Caco-2 (cell line): ENCODE measurements at regions of chr3 and their contacts with region 1.

Region 1: GRCh38 chr3:167716920-167717319 is 17.8 kb downstream of the PDCD10 start:
- DNase-seq: peak; percentile 55 to 63
- H3K4me3 ChIP-seq: no peak overlapping the region
- H3K4me3 Mint-ChIP-seq: peak overlapping the region; percentile 28
- H3K27ac Mint-ChIP-seq: no peak overlapping the region
- H3K4me1 ChIP-seq: peaks cover 29% of the 10 kb centered on the region
- H3K4me1 Mint-ChIP-seq: peaks cover 36% of the 10 kb centered on the region
- H3K27me3 ChIP-seq: no peaks in the 10 kb centered on the region
- H3K27me3 Mint-ChIP-seq: no peaks in the 10 kb centered on the region
- CTCF ChIP-seq: no peak

Region 2: DNA sequence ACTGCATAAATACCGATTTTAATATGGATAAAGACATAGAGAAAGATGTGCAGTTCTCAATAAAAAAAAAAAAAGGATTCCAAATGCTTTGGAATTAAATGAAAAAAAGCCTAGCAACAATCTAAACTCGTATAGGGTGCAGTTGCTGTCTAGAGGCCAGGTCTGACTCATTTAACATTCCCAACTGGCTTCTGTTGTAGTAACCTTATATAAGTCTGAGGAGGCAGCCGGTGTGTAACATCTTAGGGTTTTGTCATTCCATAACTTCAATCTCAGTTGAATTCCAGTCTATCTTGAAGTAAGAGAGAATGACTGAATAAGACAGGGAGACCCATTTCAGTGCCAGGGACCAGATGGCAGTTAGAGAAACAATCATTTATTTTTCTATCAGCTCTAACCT is 11.3 kb after region 1 on chr3:
- CTCF ChIA-PET with region 1: no interaction called
- POLR2A ChIA-PET with region 1: no interaction called
- intact Hi-C with region 1: loop called (anchors 1 kb)
- DNase-seq: no peak
- H3K4me3 ChIP-seq: no peak overlapping the region
- H3K4me3 Mint-ChIP-seq: no peak overlapping the region
- H3K27ac Mint-ChIP-seq: no peak overlapping the region
- H3K4me1 ChIP-seq: peaks cover 18% of the 10 kb centered on the region
- H3K4me1 Mint-ChIP-seq: peaks cover 25% of the 10 kb centered on the region
- H3K27me3 ChIP-seq: no peaks in the 10 kb centered on the region
- H3K27me3 Mint-ChIP-seq: no peaks in the 10 kb centered on the region
- CTCF ChIP-seq: no peak

Region 3: GRCh38 chr3:167734498-167735232 is 17.7 kb after region 1 on chr3 and contains the start of gene PDCD10:
- CTCF ChIA-PET with region 1: interaction called, 7 read pairs
- POLR2A ChIA-PET with region 1: no interaction called
- intact Hi-C with region 1: loop called (anchors 1 kb)
- DNase-seq: peak; percentile 97 to 98
- H3K4me3 ChIP-seq: peak within 1 kb of the TSS; percentile 84
- H3K4me3 Mint-ChIP-seq: no peak within 1 kb of the TSS
- H3K27ac Mint-ChIP-seq: no peak within 1 kb of the TSS
- H3K4me1 ChIP-seq: 0 out of 2 replicates have a peak, but pooled peaks cover 6% of the 10 kb centered on the region
- H3K4me1 Mint-ChIP-seq: peaks cover 20% of the 10 kb centered on the region
- H3K27me3 ChIP-seq: no peaks in the 10 kb centered on the region
- H3K27me3 Mint-ChIP-seq: no peaks in the 10 kb centered on the region
- CTCF ChIP-seq: no peak
- total RNA-seq, gene PDCD10: 65.7 and 65.8 TPM in 2 replicates

Region 4: GRCh38 chr3:167761302-167761701 is 44.4 kb after region 1 on chr3:
- CTCF ChIA-PET with region 1: no interaction called
- POLR2A ChIA-PET with region 1: no interaction called
- intact Hi-C with region 1: loop called (anchors 2 kb)
- DNase-seq: no peak
- H3K4me3 ChIP-seq: no peak overlapping the region
- H3K4me3 Mint-ChIP-seq: no peak overlapping the region
- H3K27ac Mint-ChIP-seq: no peak overlapping the region
- H3K4me1 ChIP-seq: no peaks in the 10 kb centered on the region; the same call in 1 of the 2 replicates
- H3K4me1 Mint-ChIP-seq: peaks cover 5% of the 10 kb centered on the region
- H3K27me3 ChIP-seq: no peaks in the 10 kb centered on the region
- H3K27me3 Mint-ChIP-seq: no peaks in the 10 kb centered on the region
- CTCF ChIP-seq: no peak